CD8-positive, alpha-beta T cell (primary cell): ENCODE measurements at regions of chr22 and their contacts with region 1.

Region 1: DNA sequence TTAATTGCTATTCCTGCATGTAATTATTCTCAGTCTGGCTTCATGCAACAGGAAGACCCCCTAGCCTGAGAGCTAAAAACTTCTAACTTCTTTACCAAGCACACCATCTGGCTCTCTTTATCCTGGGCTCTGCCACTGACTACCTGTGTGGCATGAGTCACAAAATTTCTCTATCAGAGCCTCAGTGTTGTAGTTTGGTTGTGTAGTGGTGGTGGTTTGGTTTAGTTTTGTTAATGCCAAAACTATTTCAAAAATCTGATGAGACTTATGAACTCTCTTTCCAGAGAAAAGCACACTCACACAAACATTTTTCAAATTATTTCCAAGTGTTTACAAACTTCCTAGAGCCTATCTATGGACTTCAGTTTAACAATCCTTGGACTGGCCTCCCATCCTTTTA is 7.5 kb upstream of the IL17RA start:
- DNase-seq: no peak
- ATAC-seq: no peak
- H3K4me3 ChIP-seq: no peak overlapping the region
- H3K4me3 Mint-ChIP-seq: no peak overlapping the region
- H3K27ac ChIP-seq: no peak overlapping the region
- H3K27ac Mint-ChIP-seq: no peak overlapping the region
- H3K4me1 ChIP-seq: peaks cover 8% of the 10 kb centered on the region
- H3K4me1 Mint-ChIP-seq: peaks cover 11% of the 10 kb centered on the region
- H3K27me3 ChIP-seq: no peaks in the 10 kb centered on the region
- H3K27me3 Mint-ChIP-seq: no peaks in the 10 kb centered on the region
- CTCF ChIP-seq: no peak

Region 2: DNA sequence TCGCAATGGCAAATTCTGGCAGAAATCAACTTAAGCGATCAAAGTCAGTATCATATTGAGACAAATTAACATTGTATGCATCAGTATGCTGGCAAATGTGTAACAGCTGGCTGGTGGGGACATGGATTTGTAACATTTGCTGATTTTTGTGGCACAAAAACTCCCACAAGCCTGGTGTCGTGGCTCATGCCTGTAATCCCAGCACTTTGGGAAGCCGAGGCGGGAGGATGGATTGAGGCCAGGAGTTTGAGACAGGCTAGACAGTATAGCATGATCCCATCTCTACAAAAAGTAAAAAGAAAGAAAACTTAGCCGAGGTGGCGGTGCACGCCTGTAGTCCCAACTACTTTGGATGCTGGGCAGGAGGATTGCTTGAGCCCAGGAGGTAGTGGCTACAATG is 99.5 kb after region 1 on chr22:
- CTCF ChIA-PET with region 1: interaction called, 114 read pairs
- POLR2A ChIA-PET with region 1: interaction called, 4 read pairs
- intact Hi-C with region 1: loop called (anchors 1 kb)
- DNase-seq: no peak
- ATAC-seq: no peak
- H3K4me3 ChIP-seq: no peak overlapping the region
- H3K4me3 Mint-ChIP-seq: no peak overlapping the region
- H3K27ac ChIP-seq: no peak overlapping the region
- H3K27ac Mint-ChIP-seq: peak overlapping the region; percentile 49
- H3K4me1 ChIP-seq: peaks cover 5% of the 10 kb centered on the region
- H3K4me1 Mint-ChIP-seq: peaks cover 3% of the 10 kb centered on the region
- H3K27me3 ChIP-seq: no peaks in the 10 kb centered on the region
- H3K27me3 Mint-ChIP-seq: no peaks in the 10 kb centered on the region
- CTCF ChIP-seq: no peak

Region 3: GRCh38 chr22:17501679-17502285 is 424.5 kb after region 1 on chr22:
- CTCF ChIA-PET with region 1: interaction called, 72 read pairs
- POLR2A ChIA-PET with region 1: interaction called, 3 read pairs
- intact Hi-C with region 1: loop called (anchors 1 kb)
- DNase-seq: peak in 3 of 9 experiments; percentile 30 to 77 (median 64)
- ATAC-seq: peak; percentile 73
- H3K4me3 ChIP-seq: no peak overlapping the region
- H3K4me3 Mint-ChIP-seq: no peak overlapping the region
- H3K27ac ChIP-seq: no peak overlapping the region
- H3K27ac Mint-ChIP-seq: no peak overlapping the region
- H3K4me1 ChIP-seq: no peaks in the 10 kb centered on the region
- H3K4me1 Mint-ChIP-seq: peaks cover 2% of the 10 kb centered on the region
- H3K27me3 ChIP-seq: no peaks in the 10 kb centered on the region
- H3K27me3 Mint-ChIP-seq: peaks cover 8% of the 10 kb centered on the region
- CTCF ChIP-seq: peak; percentile 70

Region 4: GRCh38 chr22:18001040-18001893 is 924.0 kb after region 1 on chr22:
- CTCF ChIA-PET with region 1: no interaction called
- POLR2A ChIA-PET with region 1: no interaction called
- intact Hi-C with region 1: loop called in 1 of 2 experiments (anchors 10 kb)
- DNase-seq: peak in 8 of 9 experiments; percentile 34 to 88 (median 54)
- ATAC-seq: peak; percentile 40
- H3K4me3 ChIP-seq: peak overlapping the region; percentile 87 to 92
- H3K4me3 Mint-ChIP-seq: peak overlapping the region; percentile 86
- H3K27ac ChIP-seq: peak overlapping the region; percentile 53 to 79
- H3K27ac Mint-ChIP-seq: peak overlapping the region; percentile 85
- H3K4me1 ChIP-seq: peaks cover 29% of the 10 kb centered on the region
- H3K4me1 Mint-ChIP-seq: peaks cover 41% of the 10 kb centered on the region
- H3K27me3 ChIP-seq: no peaks in the 10 kb centered on the region
- H3K27me3 Mint-ChIP-seq: peaks cover 12% of the 10 kb centered on the region
- CTCF ChIP-seq: peak; percentile 31